H1 (cell line): ENCODE measurements at regions of chr11 and their contacts with region 1.

Region 1: GRCh38 chr11:4072668-4073285 is 21.8 kb upstream of the RRM1 start:
- DNase-seq: no peak
- H3K4me3 ChIP-seq: no peak overlapping the region
- H3K27ac ChIP-seq: no peak overlapping the region
- H3K4me1 ChIP-seq: no peaks in the 10 kb centered on the region
- H3K27me3 ChIP-seq: no peaks in the 10 kb centered on the region; a peak in 1 of 7 replicates
- CTCF ChIP-seq: peak in 2 of 3 experiments; percentile 89; a peak in 3 of 4 replicates
- EP300 ChIP-seq: no peak
- POLR2A ChIP-seq: no peak
- RAD21 ChIP-seq: peak; percentile 98

Region 2: GRCh38 chr11:3816668-3817067 is 256.1 kb before region 1 on chr11:
- CTCF ChIA-PET with region 1: interaction called, 21 read pairs
- POLR2A ChIA-PET with region 1: no interaction called
- DNase-seq: no peak
- H3K4me3 ChIP-seq: no peak overlapping the region
- H3K27ac ChIP-seq: no peak overlapping the region; the same call in 1 of the 2 replicates
- H3K4me1 ChIP-seq: no peaks in the 10 kb centered on the region; a peak in 1 of 7 replicates
- H3K27me3 ChIP-seq: no peaks in the 10 kb centered on the region
- CTCF ChIP-seq: no peak
- EP300 ChIP-seq: no peak
- POLR2A ChIP-seq: no peak
- RAD21 ChIP-seq: no peak

Region 3: DNA sequence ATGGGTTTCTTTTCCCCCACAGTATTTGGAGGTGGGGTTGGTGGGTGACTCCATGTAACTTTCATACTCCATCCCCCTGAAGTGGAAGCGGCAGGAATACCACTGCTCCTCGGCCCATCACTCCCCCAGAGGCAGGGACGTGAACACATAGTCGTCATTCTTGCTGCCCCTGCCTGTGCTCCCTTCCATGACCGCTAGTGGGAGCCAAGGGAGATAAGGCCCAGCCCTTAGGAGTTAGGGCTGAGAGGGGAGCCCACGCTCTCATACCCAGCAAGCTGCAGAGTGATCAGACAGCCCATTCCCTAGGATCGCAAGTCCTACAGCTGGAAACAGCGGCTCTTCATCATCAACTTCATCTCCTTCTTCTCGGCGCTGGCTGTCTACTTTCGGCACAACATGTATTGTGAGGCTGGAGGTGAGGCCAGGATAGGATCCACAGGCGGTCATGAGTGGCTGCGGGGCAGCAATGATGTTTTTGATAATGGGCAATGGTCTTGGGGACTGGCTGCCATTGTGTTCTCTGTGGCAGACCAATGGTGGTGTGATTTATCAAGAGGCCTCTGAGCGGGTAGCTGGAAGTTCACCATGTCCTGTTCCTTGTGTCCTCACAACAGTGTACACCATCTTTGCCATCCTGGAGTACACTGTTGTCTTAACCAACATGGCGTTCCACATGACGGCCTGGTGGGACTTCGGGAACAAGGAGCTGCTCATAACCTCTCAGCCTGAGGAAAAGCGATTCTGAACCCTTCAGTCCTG is 247.9 kb before region 1 on chr11:
- CTCF ChIA-PET with region 1: interaction called, 23 read pairs
- POLR2A ChIA-PET with region 1: no interaction called
- DNase-seq: peak; percentile 75 to 96
- H3K4me3 ChIP-seq: no peak overlapping the region
- H3K27ac ChIP-seq: peak overlapping the region; percentile 22; the same call in 1 of the 2 replicates
- H3K4me1 ChIP-seq: peaks cover 22 to 32% (median 24%) of the 10 kb centered on the region in 4 experiments
- H3K27me3 ChIP-seq: no peaks in the 10 kb centered on the region
- CTCF ChIP-seq: peak; percentile 99 to 100 (median 100)
- EP300 ChIP-seq: no peak
- POLR2A ChIP-seq: peak; percentile 48 to 60
- RAD21 ChIP-seq: peak; percentile 77 to 80

Region 4: GRCh38 chr11:3834664-3835461 is 237.9 kb before region 1 on chr11:
- CTCF ChIA-PET with region 1: interaction called, 422 read pairs
- POLR2A ChIA-PET with region 1: interaction called, 3 read pairs
- DNase-seq: no peak
- H3K4me3 ChIP-seq: no peak overlapping the region
- H3K27ac ChIP-seq: no peak overlapping the region
- H3K4me1 ChIP-seq: peaks cover 8 to 26% (median 16%) of the 10 kb centered on the region in 4 experiments
- H3K27me3 ChIP-seq: no peaks in the 10 kb centered on the region
- CTCF ChIP-seq: no peak
- EP300 ChIP-seq: no peak
- POLR2A ChIP-seq: no peak
- RAD21 ChIP-seq: no peak

Region 5: GRCh38 chr11:3927133-3927796 is 145.5 kb before region 1 on chr11:
- CTCF ChIA-PET with region 1: interaction called, 11 read pairs
- POLR2A ChIA-PET with region 1: no interaction called
- DNase-seq: no peak
- H3K4me3 ChIP-seq: no peak overlapping the region
- H3K27ac ChIP-seq: no peak overlapping the region
- H3K4me1 ChIP-seq: no peaks in the 10 kb centered on the region
- H3K27me3 ChIP-seq: no peaks in the 10 kb centered on the region
- CTCF ChIP-seq: no peak
- EP300 ChIP-seq: no peak
- POLR2A ChIP-seq: no peak
- RAD21 ChIP-seq: no peak

Region 6: GRCh38 chr11:4087551-4087950 is 14.8 kb after region 1 on chr11:
- CTCF ChIA-PET with region 1: interaction called, 57 read pairs
- POLR2A ChIA-PET with region 1: interaction called, 3 read pairs
- DNase-seq: no peak
- H3K4me3 ChIP-seq: no peak overlapping the region
- H3K27ac ChIP-seq: no peak overlapping the region
- H3K4me1 ChIP-seq: no peaks in the 10 kb centered on the region
- H3K27me3 ChIP-seq: 0 out of 7 replicates have a peak, but pooled peaks cover 0 to 4% (median 0%) of the 10 kb centered on the region in 4 experiments
- CTCF ChIP-seq: peak in 2 of 3 experiments; percentile 14 to 62; a peak in 2 of 4 replicates
- EP300 ChIP-seq: no peak
- POLR2A ChIP-seq: no peak
- RAD21 ChIP-seq: no peak